ENCODE measurements at regions of chr20 and their contacts with region 1.

Region 1: DNA sequence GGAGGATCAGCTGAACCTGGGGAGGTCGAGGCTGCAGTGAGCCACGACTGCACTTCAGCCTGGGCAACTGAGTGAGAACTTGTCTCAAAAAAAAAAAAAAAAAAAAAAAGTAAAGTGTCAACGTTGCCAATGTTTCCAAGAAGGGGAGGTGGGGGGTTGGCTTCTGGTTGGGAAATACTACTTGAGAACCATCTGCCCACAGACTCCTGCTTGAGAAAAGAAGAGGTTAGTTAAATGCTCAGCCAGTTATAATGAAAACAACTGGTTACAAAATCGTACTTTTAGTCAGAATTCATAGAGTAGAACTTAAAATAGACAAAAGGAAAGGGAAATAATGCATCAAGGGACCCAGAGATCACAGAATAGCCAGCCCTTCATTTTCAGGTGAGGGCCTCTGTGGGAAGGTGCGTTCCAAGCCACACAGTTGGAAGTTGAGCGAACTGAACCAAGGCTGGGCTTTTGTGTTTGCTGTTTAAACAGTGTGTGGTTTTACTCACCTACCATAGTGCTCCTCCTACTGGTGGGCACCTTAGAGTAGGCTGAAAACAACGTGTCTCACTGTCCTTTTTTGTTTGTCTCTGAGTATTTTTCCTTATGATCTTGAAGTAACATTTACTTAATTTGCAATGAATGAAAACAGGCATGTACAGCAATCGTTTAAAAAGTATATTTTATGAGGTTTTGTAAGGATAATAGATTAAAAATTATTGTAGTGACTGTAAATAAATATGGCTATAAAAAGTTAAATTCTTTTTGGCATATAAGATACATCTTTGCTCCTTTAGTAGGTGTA is 200.7 kb downstream of the BCAS1 start:
- DNase-seq: peak; percentile 94
- H3K4me3 ChIP-seq: no peak overlapping the region
- H3K4me3 Mint-ChIP-seq: peak overlapping the region; percentile 29
- H3K27ac Mint-ChIP-seq: peak overlapping the region; percentile 45
- H3K4me1 ChIP-seq: peaks cover 59% of the 10 kb centered on the region
- H3K4me1 Mint-ChIP-seq: peaks cover 63% of the 10 kb centered on the region
- H3K27me3 ChIP-seq: no peaks in the 10 kb centered on the region
- H3K27me3 Mint-ChIP-seq: no peaks in the 10 kb centered on the region
- CTCF ChIP-seq: peak; percentile 99 to 100

Region 2: GRCh38 chr20:53594068-53595017 is 275.3 kb before region 1 on chr20:
- CTCF ChIA-PET with region 1: interaction called, 4 read pairs
- POLR2A ChIA-PET with region 1: interaction called, 4 read pairs
- intact Hi-C with region 1: loop called (anchors 1 kb)
- DNase-seq: peak; percentile 99 to 100
- H3K4me3 ChIP-seq: peak overlapping the region; percentile 98
- H3K4me3 Mint-ChIP-seq: peak overlapping the region; percentile 87
- H3K27ac Mint-ChIP-seq: peak overlapping the region; percentile 80
- H3K4me1 ChIP-seq: peaks cover 38% of the 10 kb centered on the region
- H3K4me1 Mint-ChIP-seq: peaks cover 44% of the 10 kb centered on the region
- H3K27me3 ChIP-seq: no peaks in the 10 kb centered on the region
- H3K27me3 Mint-ChIP-seq: no peaks in the 10 kb centered on the region
- CTCF ChIP-seq: peak; percentile 64 to 79

Region 3: DNA sequence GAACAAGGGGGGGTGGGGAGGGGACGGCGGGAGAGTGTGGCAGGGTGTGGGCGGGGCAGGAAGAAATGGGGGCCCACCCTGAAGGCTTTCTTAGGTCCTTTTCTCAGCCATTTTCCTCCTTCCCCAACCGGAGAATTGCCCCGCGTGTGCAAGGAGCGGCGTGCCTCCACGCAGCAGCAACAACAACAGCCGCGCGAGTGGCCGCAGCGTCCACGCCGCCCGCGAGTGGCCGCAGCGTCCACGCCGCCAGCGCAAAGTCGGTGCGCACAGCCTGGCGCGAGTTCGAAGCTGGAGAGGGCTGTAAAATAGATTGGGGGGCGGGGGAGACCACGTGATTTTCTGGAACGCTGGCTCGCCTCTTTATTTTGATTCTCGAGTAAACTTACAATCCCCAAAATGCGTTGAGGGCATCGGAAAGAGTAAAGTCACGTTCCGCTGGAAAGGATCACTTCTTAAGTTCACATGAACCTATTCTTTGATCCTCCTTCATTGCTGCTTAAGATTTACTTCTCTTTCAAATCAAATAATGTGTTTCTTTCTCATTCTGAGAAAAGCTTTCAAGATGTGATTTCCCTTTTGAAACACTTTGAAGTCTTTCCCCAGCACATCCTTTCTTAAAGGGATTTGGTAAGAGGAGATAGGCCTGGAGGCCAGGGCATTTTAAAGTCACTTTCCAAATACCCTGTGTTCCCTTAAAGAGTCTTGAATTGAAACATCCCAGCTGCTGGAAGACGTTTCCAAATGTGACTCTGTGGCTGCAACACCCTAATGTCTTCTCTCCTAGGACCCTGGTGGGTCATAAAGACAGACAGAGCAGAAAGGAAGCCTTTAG is 209.4 kb before region 1 on chr20:
- CTCF ChIA-PET with region 1: interaction called, 3 read pairs
- POLR2A ChIA-PET with region 1: no interaction called
- intact Hi-C with region 1: loop called (anchors 5 kb)
- DNase-seq: peak in 1 of 2 experiments; percentile 16
- H3K4me3 ChIP-seq: no peak overlapping the region
- H3K4me3 Mint-ChIP-seq: no peak overlapping the region
- H3K27ac Mint-ChIP-seq: peak overlapping the region; percentile 67
- H3K4me1 ChIP-seq: peaks cover 29% of the 10 kb centered on the region
- H3K4me1 Mint-ChIP-seq: peaks cover 53% of the 10 kb centered on the region
- H3K27me3 ChIP-seq: no peaks in the 10 kb centered on the region
- H3K27me3 Mint-ChIP-seq: no peaks in the 10 kb centered on the region
- CTCF ChIP-seq: no peak

Region 4: GRCh38 chr20:53718142-53719021 is 151.3 kb before region 1 on chr20:
- CTCF ChIA-PET with region 1: no interaction called
- POLR2A ChIA-PET with region 1: no interaction called
- intact Hi-C with region 1: no loop called
- DNase-seq: no peak
- H3K4me3 ChIP-seq: no peak overlapping the region
- H3K4me3 Mint-ChIP-seq: no peak overlapping the region
- H3K27ac Mint-ChIP-seq: peak overlapping the region; percentile 19
- H3K4me1 ChIP-seq: peaks cover 6% of the 10 kb centered on the region
- H3K4me1 Mint-ChIP-seq: peaks cover 26% of the 10 kb centered on the region
- H3K27me3 ChIP-seq: no peaks in the 10 kb centered on the region
- H3K27me3 Mint-ChIP-seq: no peaks in the 10 kb centered on the region
- CTCF ChIP-seq: no peak

Region 5: DNA sequence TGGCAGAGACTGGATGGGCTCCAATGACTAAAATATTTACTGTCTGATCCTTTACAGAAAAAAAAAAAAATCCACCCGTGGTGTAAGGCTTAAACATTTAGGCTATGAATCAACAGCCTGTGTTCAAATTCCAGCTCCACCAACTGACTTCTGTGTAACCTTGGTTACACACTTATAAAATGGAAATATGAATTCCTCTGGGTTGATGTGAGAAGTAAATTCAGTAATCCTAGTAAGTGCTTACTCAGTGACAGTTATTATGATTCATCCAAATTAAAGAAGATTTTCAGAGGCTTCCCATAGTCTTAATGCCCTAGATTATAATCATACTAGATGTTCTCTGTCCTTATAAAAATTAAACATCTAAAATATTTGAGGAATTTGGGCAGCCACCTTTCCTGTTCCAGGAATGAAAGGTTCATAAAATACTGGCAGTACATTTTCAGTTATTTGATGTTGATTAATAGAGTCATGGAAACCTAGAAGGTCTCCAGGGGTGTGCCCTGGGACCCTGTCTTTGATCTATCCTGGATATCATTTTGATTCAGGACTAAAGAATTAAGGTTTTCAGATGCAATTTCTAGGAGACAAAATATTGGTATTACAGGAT is 95.8 kb before region 1 on chr20:
- CTCF ChIA-PET with region 1: interaction called, 3 read pairs
- POLR2A ChIA-PET with region 1: interaction called, 9 read pairs
- intact Hi-C with region 1: loop called (anchors 1 kb)
- DNase-seq: peak; percentile 29 to 52
- H3K4me3 ChIP-seq: no peak overlapping the region
- H3K4me3 Mint-ChIP-seq: peak overlapping the region; percentile 22
- H3K27ac Mint-ChIP-seq: peak overlapping the region; percentile 66
- H3K4me1 ChIP-seq: peaks cover 60% of the 10 kb centered on the region
- H3K4me1 Mint-ChIP-seq: peaks cover 64% of the 10 kb centered on the region
- H3K27me3 ChIP-seq: no peaks in the 10 kb centered on the region
- H3K27me3 Mint-ChIP-seq: no peaks in the 10 kb centered on the region
- CTCF ChIP-seq: no peak

Region 6: DNA sequence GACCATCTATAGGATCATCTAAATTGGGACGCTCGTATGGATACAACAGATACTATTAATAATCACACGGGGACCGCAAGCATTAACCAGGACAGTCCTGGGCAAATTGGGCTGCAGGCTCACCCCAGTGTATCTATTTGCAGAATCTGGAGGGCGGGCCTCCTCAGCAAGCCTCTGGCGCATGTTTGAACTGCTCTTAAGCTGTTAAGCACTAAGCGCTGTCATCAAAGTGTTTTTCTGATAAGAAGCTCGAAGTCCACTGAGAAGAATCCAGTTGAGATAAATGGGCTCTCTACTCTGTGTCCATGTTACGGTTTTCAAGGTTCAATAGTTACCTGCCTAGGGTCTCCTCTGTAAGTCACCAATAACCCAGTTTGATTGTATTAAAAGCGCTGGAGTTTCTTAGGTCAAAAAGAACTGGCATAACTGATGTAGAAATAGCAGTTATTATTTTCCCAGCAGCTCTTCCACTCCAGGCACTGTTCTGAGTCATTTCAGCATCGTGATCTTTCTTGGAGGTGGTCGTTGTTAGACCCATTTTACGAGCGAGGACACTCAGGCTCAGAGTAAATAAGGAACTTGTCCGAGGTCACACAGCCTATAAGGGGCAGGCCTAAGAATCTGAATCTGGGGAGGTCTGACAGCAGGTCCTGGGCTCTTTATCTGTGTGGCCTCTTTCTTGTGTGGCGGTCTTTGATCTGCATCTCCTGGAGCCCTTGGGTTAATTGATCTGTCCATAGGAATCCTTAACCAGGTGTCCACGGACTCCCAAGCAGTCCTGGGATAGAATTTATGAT is 68.7 kb before region 1 on chr20:
- CTCF ChIA-PET with region 1: interaction called, 6 read pairs
- POLR2A ChIA-PET with region 1: interaction called, 9 read pairs
- intact Hi-C with region 1: loop called (anchors 1 kb)
- DNase-seq: peak; percentile 97 to 99
- H3K4me3 ChIP-seq: peak overlapping the region; percentile 21
- H3K4me3 Mint-ChIP-seq: peak overlapping the region; percentile 74
- H3K27ac Mint-ChIP-seq: peak overlapping the region; percentile 95
- H3K4me1 ChIP-seq: peaks cover 54% of the 10 kb centered on the region
- H3K4me1 Mint-ChIP-seq: peaks cover 67% of the 10 kb centered on the region
- H3K27me3 ChIP-seq: no peaks in the 10 kb centered on the region
- H3K27me3 Mint-ChIP-seq: no peaks in the 10 kb centered on the region
- CTCF ChIP-seq: no peak

Region 7: GRCh38 chr20:53845980-53846379 is 23.7 kb before region 1 on chr20:
- CTCF ChIA-PET with region 1: interaction called, 3 read pairs
- POLR2A ChIA-PET with region 1: interaction called, 9 read pairs
- intact Hi-C with region 1: loop called (anchors 1 kb)
- DNase-seq: no peak
- H3K4me3 ChIP-seq: no peak overlapping the region
- H3K4me3 Mint-ChIP-seq: no peak overlapping the region
- H3K27ac Mint-ChIP-seq: no peak overlapping the region
- H3K4me1 ChIP-seq: peaks cover 34% of the 10 kb centered on the region
- H3K4me1 Mint-ChIP-seq: peaks cover 39% of the 10 kb centered on the region
- H3K27me3 ChIP-seq: no peaks in the 10 kb centered on the region
- H3K27me3 Mint-ChIP-seq: no peaks in the 10 kb centered on the region
- CTCF ChIP-seq: no peak

Region 8: DNA sequence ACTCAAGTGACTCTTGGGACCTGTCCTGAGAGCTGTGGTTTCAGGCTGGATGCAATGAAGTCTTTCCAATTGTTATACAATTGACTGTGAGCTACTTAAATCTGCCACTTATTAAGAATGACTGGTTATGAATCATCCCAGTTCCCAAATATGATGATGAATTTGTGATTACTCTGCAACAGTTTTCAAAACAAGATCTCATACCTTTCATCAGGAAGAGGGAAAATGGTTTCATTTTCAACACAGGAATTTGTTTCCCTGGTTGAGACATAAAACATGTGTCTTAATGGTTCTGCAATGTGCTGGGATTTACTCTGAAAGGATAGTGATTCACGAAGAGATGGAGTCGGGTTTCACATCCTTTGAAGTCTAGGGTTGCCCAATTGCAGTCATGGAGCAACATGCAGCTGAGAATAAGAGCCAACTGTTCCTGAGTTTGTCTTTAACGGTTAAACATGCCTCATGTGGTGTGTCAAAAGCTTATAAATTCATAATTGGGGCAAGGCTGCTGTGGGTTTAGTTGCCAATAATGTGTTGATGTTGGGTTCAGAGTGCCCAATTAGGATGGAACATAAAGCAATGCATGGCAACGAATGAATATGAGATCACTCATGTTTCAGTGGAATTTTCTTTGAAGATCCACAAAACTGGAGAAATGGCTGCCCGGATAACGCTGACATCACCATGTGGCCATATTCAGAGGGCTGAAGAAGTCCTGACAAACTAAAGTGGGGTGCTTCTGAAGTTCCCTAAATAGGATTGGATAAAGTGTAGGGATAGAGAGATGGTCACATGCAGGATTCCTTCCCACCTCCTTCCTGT is 263.2 kb after region 1 on chr20:
- CTCF ChIA-PET with region 1: no interaction called
- POLR2A ChIA-PET with region 1: no interaction called
- intact Hi-C with region 1: no loop called
- DNase-seq: peak; percentile 65 to 81
- H3K4me3 ChIP-seq: no peak overlapping the region
- H3K4me3 Mint-ChIP-seq: no peak overlapping the region
- H3K27ac Mint-ChIP-seq: no peak overlapping the region
- H3K4me1 ChIP-seq: peaks cover 20% of the 10 kb centered on the region
- H3K4me1 Mint-ChIP-seq: peaks cover 6% of the 10 kb centered on the region
- H3K27me3 ChIP-seq: no peaks in the 10 kb centered on the region
- H3K27me3 Mint-ChIP-seq: peaks cover 2% of the 10 kb centered on the region
- CTCF ChIP-seq: no peak

Measured in Caco-2 (cell line).